ENCODE measurements at regions of chr22 and their contacts with region 1.

Region 1: DNA sequence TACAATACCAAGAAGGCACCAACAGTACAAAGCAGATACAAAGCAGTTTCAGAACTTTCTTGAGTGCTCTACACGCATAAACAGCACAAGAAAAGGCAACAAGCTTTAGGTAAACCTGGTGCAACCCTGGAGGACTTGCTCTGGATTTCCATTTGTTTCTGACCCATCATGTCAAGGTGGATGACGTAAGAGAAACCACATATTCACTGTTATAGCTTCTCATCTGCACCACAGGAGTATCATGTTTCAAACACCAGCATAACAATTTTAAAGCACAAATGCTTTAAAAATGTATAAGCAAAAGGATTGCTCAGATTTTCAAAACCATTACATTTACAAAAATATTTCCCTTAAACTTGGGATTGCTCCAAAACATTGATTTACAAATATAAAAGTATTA is 25.0 kb upstream of the YPEL1 start:
- DNase-seq: no peak
- ATAC-seq: no peak
- H3K4me3 Mint-ChIP-seq: no peak overlapping the region
- H3K27ac Mint-ChIP-seq: no peak overlapping the region
- H3K4me1 Mint-ChIP-seq: peaks cover 50% of the 10 kb centered on the region
- H3K27me3 Mint-ChIP-seq: no peaks in the 10 kb centered on the region

Region 2: DNA sequence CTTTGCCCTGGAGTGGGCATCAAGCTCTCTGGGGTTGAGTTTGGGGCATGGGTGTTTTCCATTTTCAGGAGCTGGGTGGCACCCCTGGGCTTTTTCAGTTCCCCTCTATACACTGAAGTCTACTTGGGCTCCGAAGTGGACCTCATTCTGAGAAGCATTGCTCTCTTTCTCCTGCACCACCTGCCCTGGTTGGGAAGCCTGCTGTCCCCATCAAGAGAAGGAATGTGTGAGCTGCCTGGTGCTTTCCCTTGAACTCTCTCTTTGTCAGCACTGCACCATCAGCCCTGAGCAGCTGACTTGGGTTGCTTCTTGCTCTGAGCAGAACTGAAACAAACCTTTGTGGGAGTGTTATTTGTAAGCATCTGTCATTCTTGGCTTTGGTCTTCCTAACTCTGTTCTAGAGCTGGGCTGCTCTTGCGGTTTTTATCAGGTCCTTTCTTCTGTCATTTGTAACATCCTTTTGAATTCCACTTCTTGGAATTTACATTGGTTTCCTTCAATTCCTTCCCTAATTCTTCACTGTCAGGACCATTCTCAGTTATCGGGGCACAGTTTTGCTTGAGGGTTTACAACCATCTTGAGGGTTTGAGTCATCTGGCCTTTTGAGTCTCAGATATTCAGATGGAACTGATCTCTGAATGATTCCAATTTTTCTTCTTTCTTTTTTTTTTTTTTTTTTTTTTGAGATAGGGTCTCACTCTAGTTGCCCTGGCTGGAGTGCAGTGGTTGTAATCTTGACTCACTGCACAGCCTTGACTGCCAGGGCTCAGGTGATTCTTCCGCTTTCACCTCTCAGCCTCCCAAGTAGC is 172.6 kb before region 1 on chr22:
- CTCF ChIA-PET with region 1: no interaction called
- POLR2A ChIA-PET with region 1: interaction called, 3 read pairs
- intact Hi-C with region 1: loop called in 1 of 2 experiments (anchors 2 kb)
- DNase-seq: peak; percentile 79
- ATAC-seq: peak; percentile 97
- H3K4me3 Mint-ChIP-seq: peak overlapping the region; percentile 12
- H3K27ac Mint-ChIP-seq: peak overlapping the region; percentile 88
- H3K4me1 Mint-ChIP-seq: peaks cover 69% of the 10 kb centered on the region
- H3K27me3 Mint-ChIP-seq: no peaks in the 10 kb centered on the region

Region 3: DNA sequence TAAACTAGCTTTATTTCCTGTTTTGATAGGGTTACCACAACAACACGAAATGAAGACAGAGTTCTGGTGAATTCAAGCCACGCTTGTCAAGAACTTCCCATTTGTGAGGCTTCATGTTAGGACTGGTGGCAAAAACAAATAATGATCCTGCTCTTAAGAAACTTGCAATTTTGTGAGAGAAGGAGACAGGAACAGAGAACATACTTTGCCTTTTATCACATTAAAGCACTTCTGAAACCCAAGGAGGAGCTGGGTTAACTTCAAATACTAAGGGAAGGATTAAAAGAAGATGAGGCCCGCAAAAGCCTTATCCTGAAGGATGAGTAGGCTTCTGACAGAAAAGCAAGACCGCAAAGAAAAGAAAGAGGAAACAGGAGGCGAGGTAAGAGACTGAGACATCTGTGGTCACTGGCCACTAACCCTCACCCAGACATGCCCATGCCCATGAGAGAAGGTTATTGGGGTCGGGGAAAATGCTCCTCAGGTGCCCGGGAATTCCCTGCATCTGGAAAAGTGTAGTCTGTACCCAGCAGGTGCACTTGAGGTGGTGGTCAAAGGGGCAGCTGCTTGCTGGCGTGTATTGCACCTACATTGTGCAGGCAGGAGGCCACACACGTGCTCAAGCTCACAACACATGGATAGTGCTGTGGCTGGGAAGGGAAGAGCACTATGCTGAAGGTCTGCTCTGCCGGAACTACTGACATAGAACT is 56.3 kb after region 1 on chr22:
- CTCF ChIA-PET with region 1: interaction called, 3 read pairs
- POLR2A ChIA-PET with region 1: no interaction called
- intact Hi-C with region 1: loop called (anchors 1 to 10 kb)
- DNase-seq: peak; percentile 23
- ATAC-seq: peak; percentile 91
- H3K4me3 Mint-ChIP-seq: peak overlapping the region; percentile 67
- H3K27ac Mint-ChIP-seq: peak overlapping the region; percentile 95
- H3K4me1 Mint-ChIP-seq: peaks cover 63% of the 10 kb centered on the region
- H3K27me3 Mint-ChIP-seq: no peaks in the 10 kb centered on the region

Region 4: DNA sequence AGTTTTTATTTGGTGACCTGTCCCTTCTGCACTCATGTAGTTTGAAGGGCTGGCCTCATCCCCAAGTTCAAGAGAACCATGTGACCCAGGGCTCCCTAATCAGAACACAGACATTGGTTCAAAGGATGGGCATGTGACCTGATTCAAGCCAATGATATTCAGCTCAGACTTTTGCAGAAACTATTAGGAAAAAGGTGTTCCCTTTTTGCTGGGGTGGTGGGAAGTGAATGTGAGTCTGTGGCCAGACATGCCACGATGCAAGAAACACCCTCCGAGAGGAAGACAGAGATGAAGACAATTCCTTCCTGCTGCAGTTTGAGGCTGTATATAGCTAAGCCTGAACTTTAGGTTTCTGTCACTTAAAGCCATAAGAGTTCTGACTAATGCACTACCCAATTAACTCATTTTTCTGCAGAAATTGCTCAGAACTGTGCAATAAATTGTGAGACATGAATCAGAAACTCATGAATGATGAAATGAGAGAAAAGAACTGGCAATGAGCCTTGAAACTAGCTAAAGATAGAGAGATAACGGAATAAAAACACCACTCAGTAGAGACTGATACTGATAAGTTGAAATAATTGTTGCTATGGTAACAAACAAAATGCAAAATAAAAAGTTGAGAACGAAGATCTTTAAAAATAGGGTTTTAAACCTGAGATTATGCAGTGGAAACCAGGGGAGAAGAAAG is 116.0 kb after region 1 on chr22:
- CTCF ChIA-PET with region 1: interaction called, 3 read pairs
- POLR2A ChIA-PET with region 1: interaction called, 5 read pairs
- intact Hi-C with region 1: loop called in 1 of 2 experiments (anchors 1 kb)
- DNase-seq: peak; percentile 63
- ATAC-seq: peak; percentile 96
- H3K4me3 Mint-ChIP-seq: no peak overlapping the region
- H3K27ac Mint-ChIP-seq: peak overlapping the region; percentile 93
- H3K4me1 Mint-ChIP-seq: peaks cover 20% of the 10 kb centered on the region
- H3K27me3 Mint-ChIP-seq: peaks cover 5% of the 10 kb centered on the region

Region 5: GRCh38 chr22:21938071-21938822 is 177.6 kb after region 1 on chr22:
- CTCF ChIA-PET with region 1: interaction called, 5 read pairs
- POLR2A ChIA-PET with region 1: no interaction called
- intact Hi-C with region 1: loop called in 1 of 2 experiments (anchors 2 kb)
- DNase-seq: peak; percentile 95
- ATAC-seq: peak; percentile 95
- H3K4me3 Mint-ChIP-seq: peak overlapping the region; percentile 67
- H3K27ac Mint-ChIP-seq: peak overlapping the region; percentile 79
- H3K4me1 Mint-ChIP-seq: peaks cover 43% of the 10 kb centered on the region
- H3K27me3 Mint-ChIP-seq: no peaks in the 10 kb centered on the region

Measured in activated CD4-positive, alpha-beta T cell treated with anti-CD3 and anti-CD28 coated beads for 36 hours (primary cell).